CD8-positive, alpha-beta T cell (primary cell): ENCODE measurements at regions of chr19 and their contacts with region 1.

Region 1: GRCh38 chr19:50804420-50805272 is 14.4 kb downstream of the ACP4 start:
- DNase-seq: peak; percentile 91 to 99 (median 96)
- ATAC-seq: peak; percentile 95
- H3K4me3 ChIP-seq: peak overlapping the region; percentile 91 to 96
- H3K4me3 Mint-ChIP-seq: peak overlapping the region; percentile 98
- H3K27ac ChIP-seq: peak overlapping the region; percentile 99
- H3K27ac Mint-ChIP-seq: peak overlapping the region; percentile 100
- H3K4me1 ChIP-seq: peaks cover 18% of the 10 kb centered on the region
- H3K4me1 Mint-ChIP-seq: peaks cover 43% of the 10 kb centered on the region
- H3K27me3 ChIP-seq: no peaks in the 10 kb centered on the region
- H3K27me3 Mint-ChIP-seq: no peaks in the 10 kb centered on the region
- CTCF ChIP-seq: no peak

Region 2: GRCh38 chr19:50025024-50025789 is 779.4 kb before region 1 on chr19 and contains the start of gene VRK3:
- CTCF ChIA-PET with region 1: no interaction called
- POLR2A ChIA-PET with region 1: no interaction called
- intact Hi-C with region 1: loop called in 1 of 2 experiments (anchors 5 kb)
- DNase-seq: peak; percentile 95 to 100 (median 97)
- ATAC-seq: peak; percentile 86
- H3K4me3 ChIP-seq: peak within 1 kb of the TSS; percentile 88 to 98
- H3K4me3 Mint-ChIP-seq: peak within 1 kb of the TSS; percentile 90
- H3K27ac ChIP-seq: peak within 1 kb of the TSS; percentile 98
- H3K27ac Mint-ChIP-seq: peak within 1 kb of the TSS; percentile 98
- H3K4me1 ChIP-seq: peaks cover 29% of the 10 kb centered on the region
- H3K4me1 Mint-ChIP-seq: peaks cover 53% of the 10 kb centered on the region
- H3K27me3 ChIP-seq: no peaks in the 10 kb centered on the region
- H3K27me3 Mint-ChIP-seq: no peaks in the 10 kb centered on the region
- CTCF ChIP-seq: no peak
- total RNA-seq, gene VRK3: 71.1 to 73.1 TPM

Region 3: DNA sequence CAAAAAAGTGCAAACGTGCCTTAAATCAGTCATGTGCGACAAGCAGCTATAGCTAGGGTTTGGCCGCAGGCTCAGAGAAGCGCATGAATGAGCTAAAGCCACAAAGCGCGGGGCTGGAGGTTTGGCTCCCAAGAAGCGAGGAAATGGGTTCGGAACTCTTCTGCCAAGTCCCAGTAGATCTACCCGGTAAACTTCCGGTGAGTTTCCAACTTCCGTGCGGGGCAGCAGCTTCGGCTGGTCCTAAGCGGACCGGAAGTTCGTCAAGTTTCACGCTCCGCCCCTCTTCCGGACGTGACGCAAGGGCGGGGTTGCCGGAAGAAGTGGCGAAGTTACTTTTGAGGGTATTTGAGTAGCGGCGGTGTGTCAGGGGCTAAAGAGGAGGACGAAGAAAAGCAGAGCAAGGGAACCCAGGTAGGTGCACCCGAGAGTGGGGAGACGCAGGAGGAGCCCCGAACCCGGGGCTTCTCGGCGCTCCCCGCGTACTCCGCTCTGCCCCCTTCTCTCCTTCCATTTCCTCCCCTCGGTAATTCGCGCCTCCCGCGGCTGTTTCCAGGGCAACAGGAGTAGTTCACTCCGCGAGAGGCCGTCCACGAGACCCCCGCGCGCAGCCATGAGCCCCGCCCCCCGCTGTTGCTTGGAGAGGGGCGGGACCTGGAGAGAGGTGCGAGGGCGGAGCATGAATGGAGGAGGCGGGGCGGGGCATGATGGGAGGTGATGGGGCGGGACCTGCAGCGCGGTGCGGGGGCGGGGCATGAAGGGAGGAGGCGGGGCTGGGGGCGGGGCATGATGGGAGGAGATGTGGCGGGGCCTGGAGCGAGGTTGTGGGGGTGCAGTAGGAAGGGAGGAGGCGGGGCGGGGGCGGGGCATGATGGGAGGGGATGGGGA is 428.2 kb before region 1 on chr19 and contains the start of gene NR1H2:
- CTCF ChIA-PET with region 1: no interaction called
- POLR2A ChIA-PET with region 1: no interaction called
- intact Hi-C with region 1: loop called (anchors 1 kb)
- DNase-seq: peak; percentile 89 to 99 (median 95)
- ATAC-seq: peak; percentile 90
- H3K4me3 ChIP-seq: peak within 1 kb of the TSS; percentile 73 to 93
- H3K4me3 Mint-ChIP-seq: peak within 1 kb of the TSS; percentile 99
- H3K27ac ChIP-seq: peak within 1 kb of the TSS; percentile 99 to 100
- H3K27ac Mint-ChIP-seq: peak within 1 kb of the TSS; percentile 100
- H3K4me1 ChIP-seq: peaks cover 11% of the 10 kb centered on the region
- H3K4me1 Mint-ChIP-seq: peaks cover 22% of the 10 kb centered on the region
- H3K27me3 ChIP-seq: no peaks in the 10 kb centered on the region
- H3K27me3 Mint-ChIP-seq: no peaks in the 10 kb centered on the region
- CTCF ChIP-seq: no peak
- total RNA-seq, gene NR1H2: 320 to 327 TPM

Region 4: DNA sequence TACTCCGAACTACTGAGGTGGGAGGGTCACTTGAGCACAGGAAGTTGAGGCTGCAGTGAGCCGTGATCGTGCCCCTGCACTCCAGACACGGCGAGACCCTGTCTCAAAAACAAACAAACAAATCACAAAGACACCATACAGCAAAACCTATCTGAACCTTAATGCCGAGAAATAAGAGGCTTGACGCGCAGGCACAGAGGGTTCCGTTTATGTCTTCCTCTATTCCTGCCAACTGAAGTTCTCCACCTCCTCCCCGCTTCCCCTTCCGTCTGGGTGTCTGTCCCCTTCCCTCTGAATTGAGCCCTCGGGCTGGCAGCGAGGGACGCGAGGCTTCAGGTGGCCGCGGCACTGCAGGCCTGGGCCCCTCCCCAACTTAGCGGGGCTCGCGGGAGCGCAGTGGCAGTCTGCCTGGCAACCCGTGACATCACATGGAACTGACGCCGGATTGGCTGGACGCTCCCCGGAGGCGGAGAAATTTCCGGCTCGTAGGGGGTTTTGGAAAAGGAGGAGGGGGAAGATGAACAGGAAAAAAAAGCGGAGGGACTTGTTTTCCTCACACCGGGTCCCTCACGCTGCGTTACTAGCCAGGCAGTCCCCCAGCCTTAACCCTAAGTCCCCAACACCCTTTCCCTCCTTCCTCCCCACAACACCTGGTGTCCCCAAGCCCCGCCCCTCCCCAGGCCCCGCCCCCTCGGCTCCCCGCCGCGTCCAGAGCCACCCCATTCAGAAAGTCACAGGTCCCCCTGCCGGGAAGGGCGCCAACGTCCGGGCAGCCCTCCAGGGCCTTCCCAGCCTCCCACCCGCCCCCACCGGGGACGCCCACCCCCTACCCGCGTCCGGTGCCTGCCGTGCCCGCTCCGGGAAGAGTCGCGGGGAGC is 373.1 kb before region 1 on chr19:
- CTCF ChIA-PET with region 1: no interaction called
- POLR2A ChIA-PET with region 1: no interaction called
- intact Hi-C with region 1: loop called in 1 of 2 experiments (anchors 2 kb)
- DNase-seq: peak; percentile 73 to 94 (median 89)
- ATAC-seq: peak; percentile 94
- H3K4me3 ChIP-seq: peak overlapping the region; percentile 58 to 65
- H3K4me3 Mint-ChIP-seq: peak overlapping the region; percentile 88
- H3K27ac ChIP-seq: peak overlapping the region; percentile 43 to 48
- H3K27ac Mint-ChIP-seq: peak overlapping the region; percentile 78
- H3K4me1 ChIP-seq: peaks cover 9% of the 10 kb centered on the region
- H3K4me1 Mint-ChIP-seq: peaks cover 17% of the 10 kb centered on the region
- H3K27me3 ChIP-seq: peaks cover 4 to 15% of the 10 kb centered on the region in 2 experiments
- H3K27me3 Mint-ChIP-seq: peaks cover 21% of the 10 kb centered on the region
- CTCF ChIP-seq: no peak

Region 5: GRCh38 chr19:51460164-51460992 is 655.7 kb after region 1 on chr19:
- CTCF ChIA-PET with region 1: no interaction called
- POLR2A ChIA-PET with region 1: no interaction called
- intact Hi-C with region 1: no loop called
- DNase-seq: no peak
- ATAC-seq: no peak
- H3K4me3 ChIP-seq: no peak overlapping the region
- H3K4me3 Mint-ChIP-seq: no peak overlapping the region
- H3K27ac ChIP-seq: no peak overlapping the region
- H3K27ac Mint-ChIP-seq: no peak overlapping the region
- H3K4me1 ChIP-seq: no peaks in the 10 kb centered on the region
- H3K4me1 Mint-ChIP-seq: peaks cover 3% of the 10 kb centered on the region
- H3K27me3 ChIP-seq: peaks cover 0 to 7% of the 10 kb centered on the region in 2 experiments
- H3K27me3 Mint-ChIP-seq: peaks cover 38% of the 10 kb centered on the region
- CTCF ChIP-seq: no peak

Region 6: DNA sequence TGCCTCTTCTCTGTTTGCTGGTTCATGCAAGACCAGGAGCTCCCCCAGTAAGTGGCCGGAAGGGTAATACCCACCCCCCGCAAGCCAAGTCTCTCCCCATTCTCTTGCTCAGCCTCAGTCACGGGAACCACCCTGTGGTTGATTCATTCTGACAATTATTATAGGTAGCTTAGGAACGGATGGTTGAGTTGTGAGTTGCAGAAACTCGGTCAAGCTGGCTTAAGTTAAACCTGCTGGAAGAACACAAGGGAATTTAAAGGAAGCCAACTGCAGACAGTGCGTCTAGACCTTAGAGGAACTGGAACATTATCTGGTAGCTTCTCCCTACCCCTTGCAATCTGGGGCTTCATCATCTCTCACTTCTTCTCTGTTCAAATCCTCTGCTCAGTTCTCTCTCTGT is 938.1 kb after region 1 on chr19:
- CTCF ChIA-PET with region 1: no interaction called
- POLR2A ChIA-PET with region 1: no interaction called
- intact Hi-C with region 1: no loop called
- DNase-seq: no peak
- ATAC-seq: no peak
- H3K4me3 ChIP-seq: no peak overlapping the region
- H3K4me3 Mint-ChIP-seq: no peak overlapping the region
- H3K27ac ChIP-seq: no peak overlapping the region
- H3K27ac Mint-ChIP-seq: no peak overlapping the region
- H3K4me1 ChIP-seq: no peaks in the 10 kb centered on the region
- H3K4me1 Mint-ChIP-seq: no peaks in the 10 kb centered on the region
- H3K27me3 ChIP-seq: no peaks in the 10 kb centered on the region
- H3K27me3 Mint-ChIP-seq: peaks cover 16% of the 10 kb centered on the region
- CTCF ChIP-seq: no peak